Gastrocnemius medialis (tissue), 4 donors: ENCODE measurements at regions of chr1 and their contacts with region 1.

Region 1: DNA sequence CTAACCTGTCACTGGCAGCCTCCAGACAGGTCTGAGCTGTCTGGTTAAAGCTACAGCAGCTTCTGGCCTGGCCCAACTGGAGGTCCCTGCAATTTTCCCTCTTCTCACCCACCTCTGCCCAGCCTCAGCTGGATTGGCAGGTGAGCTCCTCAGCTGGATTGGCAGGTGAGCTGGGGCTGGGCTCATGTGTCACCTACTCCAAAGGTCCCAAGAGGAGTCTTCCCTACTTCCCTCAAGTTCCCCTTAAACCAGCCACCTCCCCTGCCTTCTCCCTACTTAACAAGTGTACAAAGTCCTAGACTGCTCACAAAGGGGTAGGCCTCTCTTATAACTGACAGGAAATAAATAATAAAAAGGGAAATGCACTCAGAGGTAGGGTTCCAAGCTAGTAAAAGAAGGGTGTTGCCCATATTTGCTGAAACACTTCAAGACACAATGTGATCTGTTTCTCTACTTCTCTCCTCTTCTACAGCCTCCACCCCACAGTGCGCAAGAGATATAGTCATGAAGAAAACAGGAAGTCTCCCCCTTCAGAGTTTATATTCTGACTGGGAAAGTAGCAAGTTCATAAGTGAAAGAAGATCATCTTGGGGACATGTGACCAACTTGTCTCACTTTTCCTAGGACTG is at the start of gene GPA33:
- DNase-seq: no peak
- ATAC-seq: no peak
- H3K4me3 ChIP-seq: no peak within 1 kb of the TSS
- H3K27ac ChIP-seq: peak within 1 kb of the TSS; percentile 21 to 48 (median 34)
- H3K4me1 ChIP-seq: peaks cover 31 to 49% of the 10 kb centered on the region in 2 donors
- H3K27me3 ChIP-seq: no peaks in the 10 kb centered on the region
- CTCF ChIP-seq: no peak
- POLR2A ChIP-seq: no peak
- total RNA-seq, gene GPA33: 1.9 TPM in 1 of 4 donors, not detected in the others

Region 2: GRCh38 chr1:166865931-166866330 is 224.5 kb before region 1 on chr1:
- in situ Hi-C with region 1: no loop called
- intact Hi-C with region 1: no loop called
- DNase-seq: no peak
- ATAC-seq: no peak
- H3K4me3 ChIP-seq: no peak overlapping the region
- H3K27ac ChIP-seq: no peak overlapping the region
- H3K4me1 ChIP-seq: peaks cover 0 to 1% of the 10 kb centered on the region in 2 donors
- H3K27me3 ChIP-seq: no peaks in the 10 kb centered on the region
- CTCF ChIP-seq: no peak
- POLR2A ChIP-seq: no peak

Region 3: DNA sequence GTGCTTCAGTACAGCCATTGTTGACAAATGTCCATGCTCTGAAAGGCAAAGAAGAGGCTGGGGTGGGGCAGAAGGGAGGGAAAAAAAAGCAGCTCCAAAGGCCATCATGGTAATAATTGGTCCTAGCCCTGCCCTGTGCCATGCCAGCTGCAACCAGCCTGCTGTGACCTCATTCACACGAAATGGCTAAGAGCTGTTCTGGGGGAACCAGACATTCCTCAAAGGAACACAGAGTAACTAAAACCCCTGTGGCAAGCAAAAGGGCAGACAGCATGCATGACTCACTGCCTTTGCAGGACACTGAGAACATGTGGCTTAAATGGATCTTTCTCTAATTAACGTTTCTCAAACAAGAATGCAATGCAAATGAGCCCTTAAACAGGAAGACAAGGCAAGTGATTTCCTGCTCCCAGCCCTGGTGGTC is 45.8 kb after region 1 on chr1:
- in situ Hi-C with region 1: no loop called
- intact Hi-C with region 1: loop called (anchors 5 kb)
- DNase-seq: peak; percentile 81 to 87
- ATAC-seq: peak; percentile 92 to 96
- H3K4me3 ChIP-seq: no peak overlapping the region
- H3K27ac ChIP-seq: peak overlapping the region; percentile 68 to 88 (median 80)
- H3K4me1 ChIP-seq: peaks cover 21 to 59% of the 10 kb centered on the region in 2 donors
- H3K27me3 ChIP-seq: no peaks in the 10 kb centered on the region
- CTCF ChIP-seq: no peak
- POLR2A ChIP-seq: no peak